ENCODE measurements at regions of chr7 and their contacts with region 1.

Region 1: DNA sequence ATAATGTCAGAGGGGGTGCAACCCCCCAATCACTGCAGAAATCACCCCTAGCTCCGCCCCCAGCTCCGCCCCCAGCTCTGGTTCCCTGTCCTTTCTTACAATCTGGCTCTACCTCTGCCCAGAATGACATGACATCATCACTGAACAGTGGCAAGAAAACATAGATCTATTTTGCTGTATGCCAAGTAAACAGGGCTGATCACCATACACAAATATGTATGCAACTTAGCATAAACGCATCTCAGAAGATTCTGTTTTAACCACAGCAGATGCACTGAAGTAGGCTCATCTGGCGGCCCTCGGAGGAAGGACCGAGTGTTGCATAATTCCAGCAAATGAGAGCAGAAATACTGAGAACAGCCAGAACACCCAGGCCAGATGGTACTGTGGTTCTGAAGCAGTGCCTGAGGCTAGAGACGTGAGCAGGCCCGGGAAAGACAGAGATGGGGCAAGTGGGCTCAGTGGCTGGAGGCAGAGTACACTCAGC is 293.3 kb upstream of the KLF14 start:
- DNase-seq: peak; percentile 52
- H3K4me3 Mint-ChIP-seq: no peak overlapping the region
- H3K27ac Mint-ChIP-seq: peak overlapping the region; percentile 74
- H3K4me1 Mint-ChIP-seq: peaks cover 86% of the 10 kb centered on the region
- H3K27me3 Mint-ChIP-seq: no peaks in the 10 kb centered on the region

Region 2: DNA sequence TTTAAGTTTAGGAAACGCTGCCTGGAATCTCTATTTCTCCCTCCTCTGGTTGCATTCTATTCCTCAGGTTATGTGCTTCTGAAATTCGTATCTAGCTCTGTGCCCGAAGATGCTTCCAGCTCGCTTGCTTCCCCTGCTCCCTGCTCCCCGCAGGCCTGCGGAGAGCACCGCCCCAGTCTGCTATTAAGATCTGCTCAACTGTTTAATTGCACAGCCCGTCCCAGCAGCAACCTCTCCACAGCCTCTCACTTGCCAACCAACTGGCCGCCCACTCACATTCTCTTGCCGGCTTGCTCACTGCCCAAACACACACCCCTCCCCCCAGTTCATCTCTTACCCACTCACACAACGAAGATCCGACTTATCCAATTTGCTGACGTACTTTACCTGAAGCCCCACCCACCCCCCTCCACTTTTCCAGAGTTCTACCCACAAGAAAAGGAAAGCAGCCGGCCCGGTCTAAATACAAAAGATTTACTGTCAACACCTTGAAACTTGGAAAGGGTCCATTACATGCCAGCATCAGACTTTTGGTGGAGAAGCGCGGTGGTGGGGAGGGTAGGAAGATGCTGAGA is 126.0 kb before region 1 on chr7:
- CTCF ChIA-PET with region 1: no interaction called
- intact Hi-C with region 1: no loop called
- DNase-seq: no peak
- H3K4me3 Mint-ChIP-seq: no peak overlapping the region
- H3K27ac Mint-ChIP-seq: peak overlapping the region; percentile 90
- H3K4me1 Mint-ChIP-seq: peaks cover 96% of the 10 kb centered on the region
- H3K27me3 Mint-ChIP-seq: no peaks in the 10 kb centered on the region

Region 3: GRCh38 chr7:130966246-130967009 is 60.9 kb before region 1 on chr7:
- CTCF ChIA-PET with region 1: interaction called, 3 read pairs
- intact Hi-C with region 1: loop called (anchors 1 kb)
- DNase-seq: no peak
- H3K4me3 Mint-ChIP-seq: peak overlapping the region; percentile 1
- H3K27ac Mint-ChIP-seq: peak overlapping the region; percentile 90
- H3K4me1 Mint-ChIP-seq: peaks cover 77% of the 10 kb centered on the region
- H3K27me3 Mint-ChIP-seq: no peaks in the 10 kb centered on the region